Heart right ventricle (tissue), 16 donors: ENCODE measurements at regions of chr3 and their contacts with region 1.

Region 1: GRCh38 chr3:20023623-20024405 is 11.8 kb upstream of the PP2D1 start:
- DNase-seq: peak; percentile 36 to 47
- ATAC-seq: peak; percentile 84 to 98 (median 95)
- H3K4me3 ChIP-seq: no peak overlapping the region
- H3K27ac ChIP-seq: peak overlapping the region in 9 of 10 donors; percentile 11 to 84 (median 63)
- H3K4me1 ChIP-seq: peaks cover 0 to 38% (median 21%) of the 10 kb centered on the region in 9 donors
- H3K27me3 ChIP-seq: no peaks in the 10 kb centered on the region
- CTCF ChIP-seq: no peak

Region 2: GRCh38 chr3:19946832-19947548 is 76.8 kb before region 1 on chr3 and contains the start of gene RAB5A:
- intact Hi-C with region 1: loop called in 2 of 10 experiments (anchors 5 kb)
- DNase-seq: peak; percentile 96 to 98
- ATAC-seq: peak; percentile 97 to 99 (median 98)
- H3K4me3 ChIP-seq: peak within 1 kb of the TSS; percentile 79 to 99 (median 98)
- H3K27ac ChIP-seq: peak within 1 kb of the TSS; percentile 89 to 99 (median 98)
- H3K4me1 ChIP-seq: peaks cover 0 to 44% (median 35%) of the 10 kb centered on the region in 9 donors
- H3K27me3 ChIP-seq: no peaks in the 10 kb centered on the region
- CTCF ChIP-seq: peak in 1 of 9 donors; percentile 1
- total RNA-seq, gene RAB5A: 52.2 to 80.9 (median 66.9) TPM

Region 3: DNA sequence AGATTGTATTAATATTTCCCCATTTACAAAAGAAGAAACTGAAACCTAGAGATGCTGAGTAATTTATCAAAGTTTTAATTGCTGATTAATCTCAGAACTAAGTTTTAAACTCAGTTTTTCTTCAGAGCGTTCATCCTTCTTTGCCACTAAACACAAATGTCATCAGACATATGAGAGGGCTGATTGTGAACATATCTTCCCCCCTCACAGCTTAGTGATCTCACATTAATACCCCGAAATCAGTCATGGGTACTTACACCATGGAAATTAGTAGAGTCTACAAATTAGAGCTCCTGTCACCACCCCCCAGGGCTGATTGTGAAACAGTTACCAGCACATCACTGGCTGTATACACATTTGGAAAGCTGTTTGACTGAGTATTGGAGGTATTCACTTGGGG is 351.5 kb after region 1 on chr3:
- intact Hi-C with region 1: no loop called
- DNase-seq: no peak
- ATAC-seq: no peak
- H3K4me3 ChIP-seq: no peak overlapping the region
- H3K27ac ChIP-seq: no peak overlapping the region
- H3K4me1 ChIP-seq: peaks cover 0 to 23% (median 12%) of the 10 kb centered on the region in 9 donors
- H3K27me3 ChIP-seq: no peaks in the 10 kb centered on the region
- CTCF ChIP-seq: no peak